ENCODE measurements at regions of chr7 and their contacts with region 1.

Region 1: GRCh38 chr7:107754642-107755041 is 10.7 kb downstream of the CBLL1 start:
- DNase-seq: peak; percentile 19

Region 2: GRCh38 chr7:107168233-107169119 is 586.2 kb before region 1 on chr7 and contains the start of gene HBP1:
- in situ Hi-C with region 1: no loop called
- DNase-seq: peak; percentile 100

Region 3: GRCh38 chr7:107799647-107800264 is 45.1 kb after region 1 on chr7:
- in situ Hi-C with region 1: no loop called
- DNase-seq: no peak

Region 4: DNA sequence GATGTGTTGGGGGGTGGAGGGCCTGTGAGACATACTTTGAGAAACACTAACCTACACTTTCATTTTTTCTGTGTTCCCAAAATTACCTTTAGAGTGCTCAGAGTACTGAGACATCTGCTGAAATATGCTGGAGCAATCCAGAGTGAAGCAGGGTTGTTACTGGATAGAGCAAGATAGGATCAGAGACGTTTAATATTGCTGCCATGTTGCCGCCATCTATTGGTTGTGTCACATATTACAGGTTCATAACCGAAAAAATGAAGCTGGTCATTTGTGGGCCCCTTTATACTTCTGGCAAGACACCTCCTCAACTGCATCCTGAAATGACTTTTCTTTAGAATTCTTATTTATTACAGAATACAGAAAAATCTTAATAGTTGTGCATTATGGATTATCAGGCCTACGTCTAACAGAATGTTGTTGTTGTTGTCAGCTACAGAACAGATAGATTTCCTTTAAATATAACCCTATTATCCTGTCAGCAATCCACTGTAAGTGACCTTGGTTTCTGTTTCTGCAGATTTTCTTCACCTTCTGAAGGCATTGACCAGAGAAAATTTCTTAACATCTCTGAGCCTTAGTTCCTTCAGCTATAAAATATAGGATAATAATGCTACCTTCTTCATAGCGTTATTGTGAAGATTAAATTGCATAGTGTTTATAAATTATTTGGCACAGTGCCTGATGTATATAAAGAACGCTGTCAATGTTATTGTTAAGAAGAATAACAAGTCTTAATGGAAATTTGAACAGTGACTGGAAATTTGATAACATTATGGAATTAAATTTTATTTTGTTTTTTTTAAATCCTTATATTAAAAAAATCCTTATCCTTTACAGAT is 120.2 kb after region 1 on chr7:
- in situ Hi-C with region 1: loop called (anchors 25 kb)
- DNase-seq: peak; percentile 72